ENCODE measurements at regions of chr3 and their contacts with region 1.

Region 1: DNA sequence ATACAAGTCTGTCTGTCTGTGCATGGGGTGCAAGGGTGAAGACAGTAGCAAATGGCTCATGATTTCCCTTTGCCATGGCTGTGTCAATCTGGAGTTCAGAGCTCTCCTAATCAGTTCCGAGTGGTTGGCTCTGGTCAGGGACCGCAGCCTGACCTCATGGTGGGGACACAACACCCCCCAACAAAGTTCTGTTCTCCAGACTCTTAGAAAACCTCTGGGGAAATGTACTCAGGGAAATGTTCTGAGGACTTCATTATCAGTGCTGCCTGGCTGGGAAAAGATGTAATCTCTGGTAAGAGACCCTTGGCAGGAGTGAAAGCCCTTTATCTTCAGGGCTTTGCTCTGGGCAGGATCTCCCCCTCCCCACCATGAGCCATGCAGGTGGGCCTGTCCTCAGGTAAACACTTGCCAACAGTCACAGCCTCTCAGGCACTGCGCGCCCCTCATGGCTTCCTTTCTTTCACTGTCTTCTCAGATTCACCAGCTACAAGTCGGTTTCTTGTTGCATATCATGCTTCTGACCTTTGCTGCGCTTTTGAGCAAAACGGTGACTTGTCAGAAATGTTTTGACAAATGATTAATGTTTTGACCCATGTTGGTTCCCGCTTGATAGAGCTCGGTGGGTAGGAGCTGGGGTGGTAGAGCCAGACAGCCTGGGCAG is 95.5 kb downstream of the ST6GAL1 start:
- DNase-seq: peak; percentile 82
- H3K4me3 Mint-ChIP-seq: peak overlapping the region; percentile 83
- H3K27ac Mint-ChIP-seq: peak overlapping the region; percentile 98
- H3K4me1 Mint-ChIP-seq: peaks cover 52% of the 10 kb centered on the region
- H3K27me3 Mint-ChIP-seq: no peaks in the 10 kb centered on the region

Region 2: DNA sequence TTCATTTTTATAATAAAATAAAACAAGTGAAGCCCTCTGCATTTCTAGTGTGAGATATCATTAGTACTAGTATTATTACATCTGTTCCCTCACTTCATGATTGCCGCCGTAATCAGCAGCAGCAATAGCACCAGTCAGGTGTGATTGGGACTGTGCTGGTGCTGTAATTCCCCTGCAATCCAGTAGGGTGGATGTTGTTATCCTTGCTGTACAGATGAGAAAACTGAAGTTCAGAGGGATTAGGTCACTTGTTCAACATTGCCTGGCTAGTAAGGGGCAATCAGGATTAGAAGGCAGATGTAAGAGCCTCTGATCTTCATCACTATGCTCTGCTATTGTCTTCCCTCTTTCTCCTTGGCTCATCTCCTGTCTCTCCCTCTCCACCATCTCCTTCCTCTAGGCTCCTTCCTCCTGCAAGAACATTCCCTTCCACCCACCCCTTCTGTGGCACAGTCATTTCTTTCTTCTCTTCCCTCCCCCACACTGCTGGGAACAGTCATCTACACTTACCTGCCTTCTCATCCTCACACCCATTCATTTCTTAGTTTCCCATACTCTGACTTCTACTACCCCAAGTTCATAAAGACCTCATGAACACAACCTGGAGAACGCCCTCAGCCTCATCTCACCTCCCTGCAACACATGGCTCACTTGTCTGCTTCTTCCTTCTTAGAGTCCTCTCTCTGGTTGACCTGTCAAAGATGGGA is 511.3 kb before region 1 on chr3:
- intact Hi-C with region 1: no loop called
- DNase-seq: no peak
- H3K4me3 Mint-ChIP-seq: peak overlapping the region; percentile 9
- H3K27ac Mint-ChIP-seq: peak overlapping the region; percentile 76
- H3K4me1 Mint-ChIP-seq: peaks cover 41% of the 10 kb centered on the region
- H3K27me3 Mint-ChIP-seq: no peaks in the 10 kb centered on the region

Region 3: DNA sequence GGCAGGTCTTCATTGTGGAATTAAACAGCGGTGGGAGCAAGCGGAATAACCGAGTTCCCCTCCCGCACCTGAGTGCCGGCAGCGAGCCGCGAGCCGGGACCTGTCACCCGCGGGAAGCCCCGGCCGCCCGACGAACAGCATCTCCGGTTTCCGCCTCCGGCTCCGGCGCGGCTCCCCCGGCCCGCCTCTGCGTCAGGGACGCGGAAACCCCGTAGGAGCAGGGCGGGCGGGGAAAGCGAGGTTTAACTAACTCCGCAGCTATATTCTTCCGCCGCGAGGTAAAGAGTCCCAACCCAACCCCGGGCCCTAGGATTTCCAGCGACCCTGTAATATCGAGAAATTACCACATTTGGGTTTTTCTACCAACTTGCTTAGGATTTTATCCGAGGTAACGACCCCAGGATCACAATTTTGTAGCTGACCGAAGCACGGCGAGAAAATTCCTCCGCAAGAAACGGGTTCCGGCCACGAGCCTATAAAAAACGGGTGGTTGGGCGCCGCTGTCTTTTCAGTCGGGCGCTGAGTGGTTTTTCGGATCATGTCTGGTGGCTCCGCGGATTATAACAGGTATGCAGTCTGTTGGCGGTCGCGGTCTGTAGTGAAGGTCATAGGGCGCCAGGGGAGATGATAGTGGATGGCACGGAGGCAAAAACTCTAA is 242.6 kb before region 1 on chr3 and contains the start of gene EIF4A2:
- intact Hi-C with region 1: loop called (anchors 2 kb)
- DNase-seq: peak; percentile 97
- H3K4me3 Mint-ChIP-seq: peak within 1 kb of the TSS; percentile 100
- H3K27ac Mint-ChIP-seq: peak within 1 kb of the TSS; percentile 100
- H3K4me1 Mint-ChIP-seq: peaks cover 37% of the 10 kb centered on the region
- H3K27me3 Mint-ChIP-seq: peaks cover 3% of the 10 kb centered on the region
- total RNA-seq, gene EIF4A2: 502 and 507 TPM in 2 replicates

Region 4: GRCh38 chr3:186849374-186849975 is 176.3 kb before region 1 on chr3:
- intact Hi-C with region 1: loop called (anchors 2 kb)
- DNase-seq: peak; percentile 73
- H3K4me3 Mint-ChIP-seq: no peak overlapping the region
- H3K27ac Mint-ChIP-seq: peak overlapping the region; percentile 2
- H3K4me1 Mint-ChIP-seq: peaks cover 15% of the 10 kb centered on the region
- H3K27me3 Mint-ChIP-seq: peaks cover 22% of the 10 kb centered on the region

Region 5: DNA sequence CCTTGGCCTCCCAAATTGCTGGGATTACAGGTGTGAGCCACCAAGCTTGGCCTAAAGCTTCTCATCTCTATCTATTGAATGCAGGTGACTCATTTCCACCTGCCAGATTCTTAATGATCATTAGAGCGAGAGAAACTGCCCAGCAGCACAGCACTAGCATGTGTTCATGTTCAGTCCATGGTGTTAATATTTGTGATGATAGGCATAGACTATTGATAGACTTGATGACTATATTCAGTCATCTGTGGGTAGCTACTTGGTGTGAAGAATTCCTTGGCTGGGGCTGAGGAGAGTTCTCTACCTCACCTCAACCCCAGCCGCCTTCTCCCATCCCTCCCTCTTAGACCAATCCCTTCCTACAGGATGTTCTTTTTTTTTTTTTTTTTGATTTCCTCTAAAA is 35.5 kb before region 1 on chr3:
- intact Hi-C with region 1: no loop called
- DNase-seq: no peak
- H3K4me3 Mint-ChIP-seq: no peak overlapping the region
- H3K27ac Mint-ChIP-seq: no peak overlapping the region
- H3K4me1 Mint-ChIP-seq: peaks cover 28% of the 10 kb centered on the region
- H3K27me3 Mint-ChIP-seq: no peaks in the 10 kb centered on the region

Region 6: GRCh38 chr3:187000711-187001151 is 25.1 kb before region 1 on chr3:
- intact Hi-C with region 1: loop called (anchors 1 kb)
- DNase-seq: peak; percentile 78
- H3K4me3 Mint-ChIP-seq: peak overlapping the region; percentile 63
- H3K27ac Mint-ChIP-seq: peak overlapping the region; percentile 87
- H3K4me1 Mint-ChIP-seq: peaks cover 56% of the 10 kb centered on the region
- H3K27me3 Mint-ChIP-seq: no peaks in the 10 kb centered on the region

Region 7: GRCh38 chr3:187041362-187042307 is 15.8 kb after region 1 on chr3:
- intact Hi-C with region 1: loop called (anchors 1 kb)
- DNase-seq: peak; percentile 88
- H3K4me3 Mint-ChIP-seq: peak overlapping the region; percentile 77
- H3K27ac Mint-ChIP-seq: peak overlapping the region; percentile 95
- H3K4me1 Mint-ChIP-seq: peaks cover 79% of the 10 kb centered on the region
- H3K27me3 Mint-ChIP-seq: no peaks in the 10 kb centered on the region